IMR-90 (cell line): ENCODE measurements at regions of chr1 and their contacts with region 1.

Region 1: DNA sequence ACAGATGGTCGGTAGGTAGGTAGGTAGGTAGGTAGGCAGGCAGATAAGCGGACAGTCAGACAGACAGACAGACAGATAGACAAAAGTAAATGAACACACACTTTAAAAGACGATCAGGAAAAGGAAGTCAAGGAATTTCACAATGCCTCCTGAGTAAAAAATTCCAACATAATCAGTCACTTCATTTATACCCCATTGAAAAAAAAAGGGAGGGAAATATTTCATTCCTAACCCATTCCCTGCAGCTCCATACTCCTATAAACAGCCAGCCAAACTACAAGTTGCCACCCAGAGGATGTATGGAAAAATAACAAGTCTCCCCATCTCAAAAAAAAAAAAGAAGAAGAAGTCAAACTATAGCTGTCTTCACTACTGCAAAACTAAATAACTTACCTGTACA is 43.4 kb downstream of the ZZZ3 start:
- DNase-seq: peak; percentile 61
- ATAC-seq: peak; percentile 65
- H3K4me3 ChIP-seq: no peak overlapping the region
- H3K27ac ChIP-seq: 0 out of 2 replicates have a peak overlapping the region, but pooled peaks have one; percentile 44
- H3K4me1 ChIP-seq: peaks cover 2% of the 10 kb centered on the region; the same call in 1 of the 2 replicates
- H3K27me3 ChIP-seq: no peaks in the 10 kb centered on the region
- CTCF ChIP-seq: no peak
- POLR2A ChIP-seq: no peak
- RAD21 ChIP-seq: no peak

Region 2: DNA sequence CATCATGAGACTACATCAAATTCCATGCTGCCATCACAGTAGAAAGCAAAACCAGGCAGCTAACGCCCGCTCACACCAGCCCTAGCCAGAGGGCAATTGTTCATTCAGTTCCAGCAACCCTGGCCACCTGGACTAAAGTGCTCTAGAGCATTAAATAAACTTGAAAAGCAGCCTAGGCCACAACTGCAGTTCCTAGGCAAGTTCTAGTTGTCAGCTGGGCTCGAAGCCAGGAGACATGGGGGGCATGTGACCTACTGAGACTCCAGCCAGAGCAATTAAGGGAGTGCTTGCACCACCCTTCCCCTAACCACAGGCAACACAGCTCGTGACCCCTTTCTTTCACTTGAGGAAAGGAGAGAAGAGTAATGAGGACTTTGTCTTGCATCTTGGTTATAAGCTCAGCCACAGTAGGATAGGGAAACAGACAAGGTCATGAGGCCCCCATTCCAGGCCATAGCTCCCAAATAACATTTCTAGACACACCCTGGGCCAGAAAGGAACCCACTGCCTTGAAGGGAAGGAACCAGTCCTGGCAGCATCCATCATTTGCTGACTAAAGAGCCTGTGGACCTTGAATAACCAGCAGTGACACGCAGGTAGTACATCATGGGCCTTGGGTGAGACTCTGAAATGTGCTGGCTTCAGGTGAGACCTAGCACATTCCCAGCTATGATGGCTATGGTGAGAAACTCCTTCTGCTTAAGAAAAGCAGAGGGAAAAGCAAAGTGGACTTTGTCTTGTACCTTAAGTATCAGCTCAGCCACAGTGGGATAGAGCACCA is 33.6 kb before region 1 on chr1:
- CTCF ChIA-PET with region 1: no interaction called
- POLR2A ChIA-PET with region 1: no interaction called
- dilution Hi-C with region 1: no loop called
- in situ Hi-C with region 1: no loop called
- intact Hi-C with region 1: loop called (anchors 5 kb)
- DNase-seq: peak; percentile 38
- ATAC-seq: peak; percentile 45
- H3K4me3 ChIP-seq: no peak overlapping the region
- H3K27ac ChIP-seq: no peak overlapping the region; the same call in 1 of the 2 replicates
- H3K4me1 ChIP-seq: peaks cover 8% of the 10 kb centered on the region; the same call in 1 of the 2 replicates
- H3K27me3 ChIP-seq: no peaks in the 10 kb centered on the region
- CTCF ChIP-seq: no peak
- POLR2A ChIP-seq: no peak
- RAD21 ChIP-seq: no peak

Region 3: GRCh38 chr1:78004719-78005447 is 365.8 kb after region 1 on chr1 and contains the start of gene DNAJB4:
- CTCF ChIA-PET with region 1: no interaction called
- POLR2A ChIA-PET with region 1: no interaction called
- dilution Hi-C with region 1: no loop called
- in situ Hi-C with region 1: no loop called
- intact Hi-C with region 1: no loop called
- DNase-seq: peak; percentile 99
- ATAC-seq: peak; percentile 93
- H3K4me3 ChIP-seq: peak within 1 kb of the TSS; percentile 80
- H3K27ac ChIP-seq: peak within 1 kb of the TSS; percentile 85
- H3K4me1 ChIP-seq: peaks cover 4% of the 10 kb centered on the region
- H3K27me3 ChIP-seq: no peaks in the 10 kb centered on the region
- CTCF ChIP-seq: no peak
- POLR2A ChIP-seq: peak; percentile 94
- RAD21 ChIP-seq: peak; percentile 3; the same call in 1 of the 2 replicates
- total RNA-seq, gene DNAJB4: 30.6 and 76.1 TPM in 2 replicates